ENCODE measurements at regions of chr20 and their contacts with region 1.

Region 1: GRCh38 chr20:62616728-62617621 is 25.3 kb upstream of the SLCO4A1 start:
- DNase-seq: peak; percentile 84
- ATAC-seq: peak; percentile 57
- H3K4me3 Mint-ChIP-seq: peak overlapping the region; percentile 52
- H3K27ac Mint-ChIP-seq: peak overlapping the region; percentile 93
- H3K4me1 Mint-ChIP-seq: peaks cover 36% of the 10 kb centered on the region
- H3K27me3 Mint-ChIP-seq: no peaks in the 10 kb centered on the region
- CTCF ChIP-seq: peak; percentile 99

Region 2: GRCh38 chr20:62493253-62493883 is 123.6 kb before region 1 on chr20:
- CTCF ChIA-PET with region 1: interaction called, 10 read pairs
- POLR2A ChIA-PET with region 1: no interaction called
- intact Hi-C with region 1: no loop called
- DNase-seq: no peak
- ATAC-seq: no peak
- H3K4me3 Mint-ChIP-seq: no peak overlapping the region
- H3K27ac Mint-ChIP-seq: no peak overlapping the region
- H3K4me1 Mint-ChIP-seq: no peaks in the 10 kb centered on the region
- H3K27me3 Mint-ChIP-seq: peaks cover 11% of the 10 kb centered on the region
- CTCF ChIP-seq: no peak

Region 3: GRCh38 chr20:62557445-62557844 is 59.5 kb before region 1 on chr20:
- CTCF ChIA-PET with region 1: no interaction called
- POLR2A ChIA-PET with region 1: no interaction called
- intact Hi-C with region 1: no loop called
- DNase-seq: no peak
- ATAC-seq: no peak
- H3K4me3 Mint-ChIP-seq: no peak overlapping the region
- H3K27ac Mint-ChIP-seq: no peak overlapping the region
- H3K4me1 Mint-ChIP-seq: peaks cover 5% of the 10 kb centered on the region
- H3K27me3 Mint-ChIP-seq: peaks cover 21% of the 10 kb centered on the region
- CTCF ChIP-seq: no peak

Region 4: DNA sequence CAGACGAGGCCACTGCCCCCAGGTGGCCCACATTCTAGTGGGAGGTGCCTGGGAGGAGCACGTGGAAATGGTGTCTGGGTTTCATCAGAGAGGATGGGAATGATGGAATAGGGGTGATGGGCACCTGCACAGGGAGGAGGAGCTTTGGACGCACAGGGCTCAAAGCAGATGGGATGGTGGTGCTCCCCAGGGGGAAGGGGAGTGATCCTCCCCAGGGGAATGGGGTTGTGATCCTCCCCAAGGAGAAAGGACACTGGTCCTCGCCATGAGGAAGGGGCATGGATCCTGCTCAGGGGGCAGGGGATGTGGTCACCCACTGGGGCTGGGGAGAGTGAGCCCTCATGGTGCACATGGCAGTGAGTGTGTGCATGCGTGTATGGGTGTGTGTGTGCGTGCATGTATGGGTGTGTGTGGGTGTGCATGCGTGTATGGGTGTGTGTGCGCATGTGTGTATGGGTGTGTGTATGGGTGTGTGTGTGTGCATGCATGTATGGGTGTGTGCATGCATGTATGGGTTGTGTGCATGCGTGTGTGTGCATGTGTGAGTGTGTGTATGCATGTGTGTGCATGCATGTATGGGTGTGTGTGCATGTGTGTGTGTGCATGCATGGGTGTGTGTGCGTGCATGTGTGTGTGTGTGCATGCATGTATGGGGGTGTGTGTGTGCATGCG is 24.3 kb before region 1 on chr20:
- CTCF ChIA-PET with region 1: no interaction called
- POLR2A ChIA-PET with region 1: no interaction called
- intact Hi-C with region 1: loop called (anchors 2 kb)
- DNase-seq: no peak
- ATAC-seq: no peak
- H3K4me3 Mint-ChIP-seq: no peak overlapping the region
- H3K27ac Mint-ChIP-seq: no peak overlapping the region
- H3K4me1 Mint-ChIP-seq: no peaks in the 10 kb centered on the region
- H3K27me3 Mint-ChIP-seq: peaks cover 27% of the 10 kb centered on the region
- CTCF ChIP-seq: no peak

Region 5: DNA sequence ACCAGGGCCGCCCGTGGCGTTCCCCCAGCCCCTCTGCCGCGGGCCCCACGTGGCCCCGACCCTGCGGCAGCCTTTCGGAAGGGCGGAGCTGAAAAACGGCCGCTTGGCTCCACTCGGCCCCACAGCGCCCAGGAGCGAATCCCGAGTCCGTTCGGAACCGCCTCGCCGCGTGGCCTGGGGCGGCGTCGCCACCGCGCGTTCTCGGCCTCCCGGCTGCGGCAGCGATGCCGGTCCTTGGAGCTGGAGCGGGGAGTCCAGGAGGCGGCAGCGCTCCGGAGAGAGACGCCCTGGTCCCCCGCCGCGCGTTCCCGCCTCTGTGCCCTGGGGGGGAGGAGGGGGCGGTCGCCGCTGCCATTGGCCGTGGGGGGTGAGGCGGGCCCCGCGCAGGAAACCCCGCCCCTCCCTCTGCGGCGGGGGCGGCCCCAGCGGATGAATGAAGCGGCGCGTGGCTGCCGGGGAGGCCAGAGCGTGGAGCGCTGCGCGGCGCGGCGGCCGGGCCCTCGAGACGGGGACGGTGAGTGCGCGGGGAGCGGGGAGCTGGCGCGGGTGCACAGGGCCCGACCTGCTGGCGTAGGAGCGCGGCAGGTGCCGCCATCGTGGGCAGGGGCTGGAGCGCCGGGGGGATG is 25.2 kb after region 1 on chr20 and contains the start of gene SLCO4A1:
- CTCF ChIA-PET with region 1: interaction called, 14 read pairs
- POLR2A ChIA-PET with region 1: interaction called, 12 read pairs
- intact Hi-C with region 1: loop called (anchors 2 kb)
- DNase-seq: peak; percentile 90
- ATAC-seq: peak; percentile 93
- H3K4me3 Mint-ChIP-seq: peak within 1 kb of the TSS; percentile 79
- H3K27ac Mint-ChIP-seq: peak within 1 kb of the TSS; percentile 81
- H3K4me1 Mint-ChIP-seq: peaks cover 26% of the 10 kb centered on the region
- H3K27me3 Mint-ChIP-seq: peaks cover 12% of the 10 kb centered on the region
- CTCF ChIP-seq: no peak
- total RNA-seq, gene SLCO4A1: 66.5 to 68.4 TPM